ENCODE measurements at regions of chr22 and their contacts with region 1.

Region 1: GRCh38 chr22:40270748-40271373 is 75.4 kb upstream of the ADSL start:
- DNase-seq: no peak
- ATAC-seq: no peak
- H3K4me3 ChIP-seq: no peak overlapping the region
- H3K27ac ChIP-seq: peak overlapping the region in 1 of 10 donors; percentile 20
- H3K4me1 ChIP-seq: peaks cover 0 to 30% (median 10%) of the 10 kb centered on the region in 9 donors
- H3K27me3 ChIP-seq: no peaks in the 10 kb centered on the region
- CTCF ChIP-seq: no peak

Region 2: GRCh38 chr22:40107851-40108378 is 162.9 kb before region 1 on chr22:
- intact Hi-C with region 1: no loop called
- DNase-seq: peak in 1 of 2 donors; percentile 10
- ATAC-seq: peak in 6 of 8 donors; percentile 62 to 86 (median 76)
- H3K4me3 ChIP-seq: peak overlapping the region in 8 of 10 donors; percentile 1 to 41 (median 34)
- H3K27ac ChIP-seq: peak overlapping the region in 8 of 10 donors; percentile 13 to 65 (median 45)
- H3K4me1 ChIP-seq: peaks cover 4 to 51% (median 32%) of the 10 kb centered on the region in 9 donors
- H3K27me3 ChIP-seq: no peaks in the 10 kb centered on the region
- CTCF ChIP-seq: no peak

Region 3: GRCh38 chr22:40177738-40178416 is 93.0 kb before region 1 on chr22 and contains the start of gene TNRC6B:
- intact Hi-C with region 1: loop called in 5 of 10 experiments (anchors 2 to 5 kb)
- DNase-seq: peak in 1 of 2 donors; percentile 90
- ATAC-seq: peak; percentile 96 to 99 (median 98)
- H3K4me3 ChIP-seq: peak within 1 kb of the TSS; percentile 34 to 86 (median 66)
- H3K27ac ChIP-seq: peak within 1 kb of the TSS; percentile 18 to 93 (median 83)
- H3K4me1 ChIP-seq: peaks cover 10 to 69% (median 63%) of the 10 kb centered on the region in 9 donors
- H3K27me3 ChIP-seq: no peaks in the 10 kb centered on the region
- CTCF ChIP-seq: no peak
- total RNA-seq, gene TNRC6B: 36.3 to 62.5 (median 56.0) TPM

Region 4: DNA sequence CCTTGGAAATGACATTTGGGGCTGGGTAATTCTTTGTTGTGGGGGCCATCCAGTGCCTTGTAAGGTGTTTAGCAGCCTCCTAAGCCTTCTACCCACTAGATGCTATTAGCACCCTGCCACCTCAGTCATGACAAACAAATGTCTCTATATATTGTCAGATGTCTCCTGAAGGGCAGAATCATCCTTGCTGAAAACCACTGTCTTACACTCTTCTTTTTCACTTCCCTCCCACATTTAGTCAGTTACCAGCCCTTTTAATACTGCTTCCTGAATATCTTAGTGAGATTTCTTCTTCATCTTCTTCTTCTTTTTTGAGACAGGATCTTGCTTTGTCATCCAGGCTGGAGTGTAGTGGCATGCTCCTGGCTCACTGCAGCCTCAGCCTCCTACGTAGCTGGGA is 60.0 kb before region 1 on chr22:
- intact Hi-C with region 1: loop called in 3 of 10 experiments (anchors 5 to 10 kb)
- DNase-seq: no peak
- ATAC-seq: peak in 1 of 8 donors; percentile 10
- H3K4me3 ChIP-seq: no peak overlapping the region
- H3K27ac ChIP-seq: peak overlapping the region in 4 of 10 donors; percentile 30 to 77 (median 60)
- H3K4me1 ChIP-seq: peaks cover 16 to 88% (median 70%) of the 10 kb centered on the region in 9 donors
- H3K27me3 ChIP-seq: no peaks in the 10 kb centered on the region
- CTCF ChIP-seq: no peak

Measured in heart right ventricle (tissue), 16 donors.